Activated CD8-positive, alpha-beta T cell treated with anti-CD3 and anti-CD28 coated beads, Interleukin-2, amount 10 ng/mL, durations not matched to agents 7 days and 5 days (primary cell): ENCODE measurements at regions of chr2 and their contacts with region 1.

Region 1: GRCh38 chr2:201275990-201276389 is 15.7 kb downstream of the CASP8 start:
- DNase-seq: no peak
- ATAC-seq: peak; percentile 27
- H3K4me3 Mint-ChIP-seq: no peak overlapping the region
- H3K27ac Mint-ChIP-seq: peak overlapping the region; percentile 12
- H3K4me1 Mint-ChIP-seq: peaks cover 31% of the 10 kb centered on the region
- H3K27me3 Mint-ChIP-seq: no peaks in the 10 kb centered on the region

Region 2: DNA sequence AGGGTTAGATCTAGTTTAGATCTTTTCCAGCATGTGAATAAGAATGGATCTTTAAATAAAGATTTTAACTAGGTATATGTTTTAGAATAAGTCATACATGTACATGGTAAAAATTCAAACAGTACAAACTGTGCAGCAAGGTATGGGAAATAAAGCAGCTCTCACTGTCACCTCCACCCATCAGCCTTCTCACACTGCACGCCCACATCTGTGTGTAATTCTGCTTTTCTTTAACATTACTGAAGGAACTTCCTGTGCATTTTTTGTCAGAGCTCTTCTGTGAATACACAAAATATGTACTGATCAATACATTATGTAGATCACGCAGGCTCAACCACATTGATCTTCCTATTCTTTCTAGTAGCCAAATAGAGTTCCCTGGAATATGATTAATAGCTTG is 12.2 kb before region 1 on chr2:
- CTCF ChIA-PET with region 1: interaction called, 6 read pairs
- POLR2A ChIA-PET with region 1: interaction called, 11 read pairs
- DNase-seq: peak; percentile 33
- ATAC-seq: no peak
- H3K4me3 Mint-ChIP-seq: peak overlapping the region; percentile 69
- H3K27ac Mint-ChIP-seq: peak overlapping the region; percentile 36
- H3K4me1 Mint-ChIP-seq: peaks cover 68% of the 10 kb centered on the region
- H3K27me3 Mint-ChIP-seq: no peaks in the 10 kb centered on the region

Region 3: DNA sequence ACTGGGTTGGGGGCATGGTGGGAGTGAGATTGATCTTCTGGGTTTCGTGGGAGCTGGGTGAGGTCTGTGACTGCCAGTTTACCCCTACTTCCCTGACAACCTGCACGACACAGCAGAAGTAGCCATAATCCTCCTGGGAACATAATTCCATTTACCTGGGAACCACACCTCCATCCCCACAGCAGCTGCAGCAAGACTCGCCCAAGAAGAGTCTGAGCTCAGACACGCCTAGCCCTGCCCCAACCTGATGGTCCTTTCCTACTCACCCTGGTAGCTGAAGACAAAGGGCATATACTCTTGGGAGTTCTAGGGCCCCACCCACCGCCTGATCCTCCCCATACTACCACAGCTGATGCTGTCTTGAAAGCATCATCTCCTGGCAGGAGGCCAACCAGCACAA is 37.4 kb after region 1 on chr2:
- CTCF ChIA-PET with region 1: no interaction called
- POLR2A ChIA-PET with region 1: no interaction called
- DNase-seq: no peak
- ATAC-seq: no peak
- H3K4me3 Mint-ChIP-seq: no peak overlapping the region
- H3K27ac Mint-ChIP-seq: no peak overlapping the region
- H3K4me1 Mint-ChIP-seq: no peaks in the 10 kb centered on the region
- H3K27me3 Mint-ChIP-seq: no peaks in the 10 kb centered on the region